Right cardiac atrium (tissue), 5 donors: ENCODE measurements at regions of chr1 and their contacts with region 1.

Region 1: GRCh38 chr1:198359024-198359653 is 181.3 kb downstream of the ATP6V1G3 start:
- DNase-seq: no peak
- ATAC-seq: no peak
- H3K4me3 ChIP-seq: no peak overlapping the region
- H3K27ac ChIP-seq: no peak overlapping the region
- H3K4me1 ChIP-seq: no peaks in the 10 kb centered on the region
- H3K27me3 ChIP-seq: no peaks in the 10 kb centered on the region

Region 2: GRCh38 chr1:198088360-198089071 is 270.6 kb before region 1 on chr1:
- intact Hi-C with region 1: loop called in 2 of 4 experiments (anchors 10 kb)
- DNase-seq: no peak
- ATAC-seq: peak; percentile 29 to 50
- H3K4me3 ChIP-seq: no peak overlapping the region
- H3K27ac ChIP-seq: no peak overlapping the region
- H3K4me1 ChIP-seq: peaks cover 3% of the 10 kb centered on the region
- H3K27me3 ChIP-seq: no peaks in the 10 kb centered on the region

Region 3: DNA sequence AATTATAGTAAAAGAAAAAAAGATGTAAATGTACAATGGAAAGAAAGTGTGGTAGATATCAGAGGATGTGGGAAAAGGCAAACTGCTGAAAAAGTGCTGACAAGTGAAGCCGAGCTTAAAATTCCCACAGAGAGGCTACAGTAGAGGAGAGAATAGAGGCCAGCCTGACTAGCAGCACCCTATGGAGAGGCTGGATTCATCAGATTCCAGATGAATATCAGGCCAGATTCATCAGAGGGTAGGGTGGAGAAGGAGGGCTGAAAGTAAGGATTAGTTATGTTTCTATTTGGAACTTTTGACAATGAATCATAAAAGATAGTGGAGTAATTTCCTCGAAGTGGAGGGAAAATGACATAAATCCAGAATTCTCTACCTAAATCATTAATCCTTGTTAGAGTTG is 262.7 kb before region 1 on chr1:
- intact Hi-C with region 1: loop called in 1 of 4 experiments (anchors 10 kb)
- DNase-seq: no peak
- ATAC-seq: no peak
- H3K4me3 ChIP-seq: no peak overlapping the region
- H3K27ac ChIP-seq: no peak overlapping the region
- H3K4me1 ChIP-seq: no peaks in the 10 kb centered on the region
- H3K27me3 ChIP-seq: no peaks in the 10 kb centered on the region

Region 4: GRCh38 chr1:198529414-198529813 is 170.3 kb after region 1 on chr1:
- intact Hi-C with region 1: no loop called
- DNase-seq: no peak
- ATAC-seq: no peak
- H3K4me3 ChIP-seq: no peak overlapping the region
- H3K27ac ChIP-seq: no peak overlapping the region
- H3K4me1 ChIP-seq: no peaks in the 10 kb centered on the region
- H3K27me3 ChIP-seq: no peaks in the 10 kb centered on the region